ENCODE measurements at regions of chr10 and their contacts with region 1.

Region 1: GRCh38 chr10:17249820-17250219 is 21.8 kb downstream of the VIM start:
- DNase-seq: no peak
- H3K4me3 ChIP-seq: no peak overlapping the region
- H3K27ac ChIP-seq: no peak overlapping the region
- H3K4me1 ChIP-seq: no peaks in the 10 kb centered on the region
- H3K27me3 ChIP-seq: no peaks in the 10 kb centered on the region
- CTCF ChIP-seq: peak in 2 of 5 experiments; percentile 23 to 42
- EP300 ChIP-seq: no peak
- POLR2A ChIP-seq: no peak

Region 2: GRCh38 chr10:16848562-16849154 is 401.2 kb before region 1 on chr10:
- in situ Hi-C with region 1: loop called (anchors 5 to 10 kb)
- intact Hi-C with region 1: loop called (anchors 5 kb)
- DNase-seq: no peak
- H3K4me3 ChIP-seq: no peak overlapping the region
- H3K27ac ChIP-seq: no peak overlapping the region
- H3K4me1 ChIP-seq: no peaks in the 10 kb centered on the region
- H3K27me3 ChIP-seq: no peaks in the 10 kb centered on the region
- CTCF ChIP-seq: no peak
- EP300 ChIP-seq: no peak
- POLR2A ChIP-seq: no peak

Region 3: GRCh38 chr10:17161775-17162174 is 88.0 kb before region 1 on chr10:
- in situ Hi-C with region 1: no loop called
- intact Hi-C with region 1: no loop called
- DNase-seq: no peak
- H3K4me3 ChIP-seq: no peak overlapping the region
- H3K27ac ChIP-seq: no peak overlapping the region
- H3K4me1 ChIP-seq: no peaks in the 10 kb centered on the region
- H3K27me3 ChIP-seq: no peaks in the 10 kb centered on the region
- CTCF ChIP-seq: no peak
- EP300 ChIP-seq: no peak
- POLR2A ChIP-seq: no peak

Measured in transverse colon (tissue), 4 donors.